Activated T-helper 1 cell treated with anti-CD3 and anti-CD28 coated beads, Interleukin-12 subunit alpha, Interleukin-12 subunit beta, Interleukin-2, Interleukin-4 antibody, amounts not matched to agents 30 ng/mL and 10 ng/mL and 1 ng/mL, durations not matched to agents 14 hours and 24 hours and 36 hours (primary cell): ENCODE measurements at regions of chr6 and their contacts with region 1.

Region 1: GRCh38 chr6:158999666-159000403 is at the start of gene RSPH3:
- DNase-seq: peak; percentile 86
- H3K4me3 Mint-ChIP-seq: peak within 1 kb of the TSS; percentile 95
- H3K27ac Mint-ChIP-seq: peak within 1 kb of the TSS; percentile 91
- H3K4me1 Mint-ChIP-seq: peaks cover 52% of the 10 kb centered on the region
- H3K27me3 Mint-ChIP-seq: peaks cover 2% of the 10 kb centered on the region
- total RNA-seq, gene RSPH3: 3.8 and 4.2 TPM in 2 replicates

Region 2: GRCh38 chr6:158213925-158214674 is 785.7 kb before region 1 on chr6:
- intact Hi-C with region 1: loop called (anchors 5 kb)
- DNase-seq: peak; percentile 51
- H3K4me3 Mint-ChIP-seq: no peak overlapping the region
- H3K27ac Mint-ChIP-seq: no peak overlapping the region
- H3K4me1 Mint-ChIP-seq: peaks cover 25% of the 10 kb centered on the region
- H3K27me3 Mint-ChIP-seq: no peaks in the 10 kb centered on the region

Region 3: GRCh38 chr6:158793432-158793831 is 206.4 kb before region 1 on chr6:
- intact Hi-C with region 1: loop called (anchors 1 kb)
- DNase-seq: no peak
- H3K4me3 Mint-ChIP-seq: no peak overlapping the region
- H3K27ac Mint-ChIP-seq: peak overlapping the region; percentile 4
- H3K4me1 Mint-ChIP-seq: peaks cover 73% of the 10 kb centered on the region
- H3K27me3 Mint-ChIP-seq: no peaks in the 10 kb centered on the region

Region 4: DNA sequence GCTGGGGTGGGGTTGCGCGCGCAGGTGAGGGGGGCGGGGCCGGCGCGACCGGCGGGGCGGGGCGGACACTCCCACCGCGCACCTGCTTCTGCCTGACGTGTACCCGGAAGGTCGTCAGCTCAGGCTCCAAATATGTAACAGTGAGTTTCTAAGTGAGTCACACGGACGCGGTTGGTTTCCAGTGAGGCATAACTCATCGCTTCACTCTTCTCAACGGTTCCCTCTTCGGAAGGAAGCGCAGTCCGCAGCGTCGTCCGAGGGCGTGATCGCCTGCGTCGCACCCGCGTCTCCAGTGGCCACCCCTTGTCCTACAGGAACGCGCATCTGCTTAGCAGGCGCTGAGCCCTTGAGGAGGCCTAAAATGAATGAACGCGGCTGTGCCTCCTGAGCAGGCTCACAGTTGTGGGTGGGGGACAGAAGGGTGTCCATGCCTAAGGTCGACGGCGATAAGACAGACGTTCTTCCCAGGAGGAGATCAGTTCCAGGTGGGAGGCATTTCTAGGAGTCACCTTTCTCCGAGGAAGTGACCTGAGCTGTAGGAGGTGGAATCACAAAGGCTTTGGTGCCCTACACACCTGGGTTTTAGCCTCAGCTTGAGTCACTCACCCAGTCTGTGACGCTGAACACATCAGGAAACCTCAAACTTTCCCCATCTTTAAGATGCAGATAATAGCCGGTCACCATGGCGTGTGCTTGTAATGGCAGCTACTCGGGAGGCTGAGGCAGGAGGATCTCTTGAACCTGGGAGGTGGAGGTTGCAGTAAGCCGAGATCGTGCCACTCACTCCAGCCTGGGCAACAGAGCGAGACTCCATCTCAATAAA is 129.8 kb before region 1 on chr6:
- intact Hi-C with region 1: loop called (anchors 1 kb)
- DNase-seq: peak; percentile 94
- H3K4me3 Mint-ChIP-seq: peak overlapping the region; percentile 87
- H3K27ac Mint-ChIP-seq: peak overlapping the region; percentile 99
- H3K4me1 Mint-ChIP-seq: peaks cover 37% of the 10 kb centered on the region
- H3K27me3 Mint-ChIP-seq: peaks cover 5% of the 10 kb centered on the region

Region 5: GRCh38 chr6:158926416-158926815 is 73.4 kb before region 1 on chr6:
- intact Hi-C with region 1: no loop called
- DNase-seq: no peak
- H3K4me3 Mint-ChIP-seq: no peak overlapping the region
- H3K27ac Mint-ChIP-seq: no peak overlapping the region
- H3K4me1 Mint-ChIP-seq: no peaks in the 10 kb centered on the region
- H3K27me3 Mint-ChIP-seq: no peaks in the 10 kb centered on the region

Region 6: GRCh38 chr6:159017757-159018559 is 18.1 kb after region 1 on chr6:
- intact Hi-C with region 1: loop called (anchors 1 kb)
- DNase-seq: no peak
- H3K4me3 Mint-ChIP-seq: peak overlapping the region; percentile 38
- H3K27ac Mint-ChIP-seq: peak overlapping the region; percentile 92
- H3K4me1 Mint-ChIP-seq: peaks cover 29% of the 10 kb centered on the region
- H3K27me3 Mint-ChIP-seq: no peaks in the 10 kb centered on the region

Region 7: DNA sequence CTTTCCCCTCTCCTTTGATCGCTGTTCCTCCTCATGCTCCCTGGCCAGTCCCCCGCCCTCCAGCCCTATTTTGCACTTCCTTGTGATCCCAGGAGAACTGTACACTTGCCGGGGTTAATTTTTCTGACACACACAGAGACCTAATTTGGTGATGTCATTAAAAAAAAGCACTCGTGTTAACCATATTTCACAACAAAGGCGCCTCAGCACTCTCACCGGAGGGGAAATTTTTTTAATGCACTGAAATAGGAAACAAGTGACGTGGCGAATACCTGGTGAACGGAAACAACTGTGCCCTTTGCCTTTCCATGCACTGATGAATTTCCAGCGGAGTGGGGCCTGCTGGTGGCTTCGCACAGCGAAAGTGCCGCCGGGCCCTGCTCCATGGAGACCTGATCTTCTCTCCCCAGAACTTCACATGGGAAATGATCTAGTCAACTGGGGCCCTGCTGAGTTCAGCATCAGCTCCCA is 98.8 kb after region 1 on chr6:
- intact Hi-C with region 1: loop called (anchors 1 kb)
- DNase-seq: peak; percentile 67
- H3K4me3 Mint-ChIP-seq: peak overlapping the region; percentile 76
- H3K27ac Mint-ChIP-seq: peak overlapping the region; percentile 96
- H3K4me1 Mint-ChIP-seq: peaks cover 88% of the 10 kb centered on the region
- H3K27me3 Mint-ChIP-seq: no peaks in the 10 kb centered on the region